Activated CD4-positive, alpha-beta T cell treated with anti-CD3 and anti-CD28 coated beads, Interleukin-2, amount 10 ng/mL, durations not matched to agents 24 days and 14 days (primary cell): ENCODE measurements at regions of chr1 and their contacts with region 1.

Region 1: GRCh38 chr1:41806472-41807155 is 112.1 kb downstream of the HIVEP3 start:
- DNase-seq: peak; percentile 86
- H3K4me3 Mint-ChIP-seq: peak overlapping the region; percentile 76
- H3K27ac Mint-ChIP-seq: peak overlapping the region; percentile 91
- H3K4me1 Mint-ChIP-seq: peaks cover 86% of the 10 kb centered on the region
- H3K27me3 Mint-ChIP-seq: no peaks in the 10 kb centered on the region

Region 2: GRCh38 chr1:41053316-41053715 is 753.3 kb before region 1 on chr1:
- intact Hi-C with region 1: no loop called
- DNase-seq: no peak
- H3K4me3 Mint-ChIP-seq: no peak overlapping the region
- H3K27ac Mint-ChIP-seq: no peak overlapping the region
- H3K4me1 Mint-ChIP-seq: no peaks in the 10 kb centered on the region
- H3K27me3 Mint-ChIP-seq: no peaks in the 10 kb centered on the region

Region 3: DNA sequence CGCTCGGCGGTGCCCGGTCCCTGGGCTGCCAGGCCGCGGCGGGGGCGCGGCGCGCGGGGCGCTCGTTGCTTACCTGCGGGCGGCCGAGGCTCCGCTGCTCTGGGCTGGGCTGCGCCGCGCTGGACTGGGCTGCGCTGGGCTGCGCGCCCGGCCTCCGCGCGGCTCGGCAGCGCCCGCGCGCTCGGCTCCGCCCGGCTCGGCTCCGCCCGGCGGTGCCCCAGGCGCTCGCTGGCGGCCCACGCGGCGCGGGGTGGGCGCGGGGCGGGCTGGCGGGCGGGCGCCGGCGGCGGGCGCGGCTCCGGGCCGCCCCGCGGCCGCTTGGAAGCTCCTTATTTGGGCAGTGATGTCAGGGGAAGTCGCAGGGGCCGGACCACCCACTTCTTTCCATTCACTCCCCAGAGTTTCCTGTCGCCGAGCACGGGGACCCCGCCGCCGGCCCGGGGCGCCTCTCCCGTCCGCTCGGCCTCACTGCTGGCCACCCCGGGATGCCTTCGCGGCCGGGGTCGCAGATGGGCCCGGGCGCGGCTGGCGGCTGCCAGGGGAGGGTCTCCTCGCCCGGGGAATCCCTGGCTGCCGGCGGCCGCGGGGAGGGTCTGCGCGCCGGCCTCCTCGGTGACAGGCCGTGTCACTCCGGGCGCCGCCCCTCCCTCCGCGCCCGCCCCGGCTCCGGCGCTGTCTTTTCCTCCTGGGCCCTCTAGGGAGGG is 144.4 kb before region 1 on chr1:
- intact Hi-C with region 1: loop called (anchors 2 kb)
- DNase-seq: peak; percentile 93
- H3K4me3 Mint-ChIP-seq: peak overlapping the region; percentile 71
- H3K27ac Mint-ChIP-seq: peak overlapping the region; percentile 74
- H3K4me1 Mint-ChIP-seq: peaks cover 66% of the 10 kb centered on the region
- H3K27me3 Mint-ChIP-seq: no peaks in the 10 kb centered on the region

Region 4: GRCh38 chr1:41791667-41792484 is 14.7 kb before region 1 on chr1:
- intact Hi-C with region 1: loop called (anchors 1 kb)
- DNase-seq: peak; percentile 74
- H3K4me3 Mint-ChIP-seq: peak overlapping the region; percentile 64
- H3K27ac Mint-ChIP-seq: peak overlapping the region; percentile 75
- H3K4me1 Mint-ChIP-seq: peaks cover 51% of the 10 kb centered on the region
- H3K27me3 Mint-ChIP-seq: no peaks in the 10 kb centered on the region

Region 5: GRCh38 chr1:41856944-41857285 is 50.3 kb after region 1 on chr1:
- intact Hi-C with region 1: no loop called
- DNase-seq: no peak
- H3K4me3 Mint-ChIP-seq: no peak overlapping the region
- H3K27ac Mint-ChIP-seq: peak overlapping the region; percentile 50
- H3K4me1 Mint-ChIP-seq: peaks cover 23% of the 10 kb centered on the region
- H3K27me3 Mint-ChIP-seq: no peaks in the 10 kb centered on the region

Region 6: GRCh38 chr1:42035830-42036604 is 229.4 kb after region 1 on chr1:
- intact Hi-C with region 1: loop called (anchors 5 kb)
- DNase-seq: peak; percentile 99
- H3K4me3 Mint-ChIP-seq: peak overlapping the region; percentile 82
- H3K27ac Mint-ChIP-seq: peak overlapping the region; percentile 31
- H3K4me1 Mint-ChIP-seq: peaks cover 27% of the 10 kb centered on the region
- H3K27me3 Mint-ChIP-seq: peaks cover 10% of the 10 kb centered on the region

Region 7: DNA sequence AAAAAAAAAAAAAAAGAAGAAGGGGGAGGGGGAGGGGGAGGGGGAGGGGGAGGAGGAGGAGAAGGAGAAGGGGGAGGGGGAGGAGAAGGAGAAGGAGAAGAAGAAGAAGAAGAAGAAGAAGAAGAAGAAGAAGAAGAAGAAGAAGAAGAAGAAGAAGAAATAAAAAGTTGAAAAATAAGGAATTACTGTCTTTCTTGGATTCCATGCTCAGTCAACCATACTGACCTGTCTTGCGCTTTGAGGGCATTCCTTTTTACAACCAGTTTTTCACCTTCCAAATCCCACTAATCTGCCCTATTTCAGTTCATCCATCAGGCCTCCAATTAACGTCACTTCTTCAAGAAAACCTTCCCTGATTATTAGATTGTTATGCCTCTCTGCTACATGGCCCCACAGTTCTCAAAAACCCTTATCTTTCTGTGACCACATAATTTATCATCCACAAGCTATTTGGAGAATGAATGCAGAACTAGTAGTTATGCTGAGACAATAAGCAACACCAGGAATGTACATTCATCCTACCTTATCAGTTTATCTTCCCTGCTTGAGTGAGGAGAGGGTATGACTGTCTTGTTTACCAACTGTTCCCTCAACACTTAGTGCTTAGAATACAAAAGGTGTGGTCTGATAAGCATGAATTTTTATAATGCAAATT is 415.5 kb after region 1 on chr1:
- intact Hi-C with region 1: no loop called
- DNase-seq: peak; percentile 4
- H3K4me3 Mint-ChIP-seq: no peak overlapping the region
- H3K27ac Mint-ChIP-seq: no peak overlapping the region
- H3K4me1 Mint-ChIP-seq: peaks cover 9% of the 10 kb centered on the region
- H3K27me3 Mint-ChIP-seq: no peaks in the 10 kb centered on the region